ENCODE measurements at regions of chr3 and their contacts with region 1.

Region 1: GRCh38 chr3:129942296-129942695 is 32.2 kb upstream of the TRH start:
- DNase-seq: peak; percentile 75 to 91
- H3K4me3 ChIP-seq: no peak overlapping the region
- H3K27ac ChIP-seq: no peak overlapping the region
- H3K4me1 ChIP-seq: no peaks in the 10 kb centered on the region; a peak in 1 of 7 replicates
- H3K27me3 ChIP-seq: peaks cover 0 to 5% (median 0%) of the 10 kb centered on the region in 4 experiments; a peak in 1 of 7 replicates
- CTCF ChIP-seq: peak; percentile 87 to 94 (median 90)
- EP300 ChIP-seq: no peak
- POLR2A ChIP-seq: no peak
- RAD21 ChIP-seq: peak; percentile 97

Region 2: DNA sequence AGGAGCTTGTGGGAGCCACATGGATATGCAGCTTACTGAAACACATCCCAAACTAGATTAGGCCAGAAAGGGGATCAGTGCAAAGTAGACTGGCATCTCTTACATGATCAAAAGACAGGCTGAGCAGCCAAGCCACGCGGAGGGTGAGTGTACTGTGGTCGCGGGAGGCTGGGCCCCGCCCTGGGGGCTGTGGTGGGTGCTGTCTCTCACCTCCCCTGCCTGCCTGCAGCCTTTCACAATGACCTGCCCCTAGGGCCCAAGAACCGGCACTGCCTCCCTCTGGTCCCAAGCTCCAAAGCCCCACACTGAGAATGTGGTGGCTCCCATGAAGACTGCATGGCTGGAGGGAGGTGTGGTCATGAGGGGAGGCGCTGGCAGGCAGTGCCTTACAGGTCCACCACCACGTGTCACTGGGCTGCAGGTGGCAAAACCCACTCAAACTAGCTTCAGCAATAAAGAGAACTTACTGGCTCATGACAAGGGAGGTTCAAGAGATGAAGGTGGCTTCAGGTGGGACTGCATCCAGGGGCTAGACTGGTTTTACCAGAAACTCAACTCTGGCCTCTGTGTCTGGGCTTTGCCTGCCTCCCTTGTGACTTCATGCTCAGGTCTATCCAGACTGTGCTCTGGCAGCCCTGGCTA is 308.4 kb before region 1 on chr3:
- CTCF ChIA-PET with region 1: interaction called, 11 read pairs
- POLR2A ChIA-PET with region 1: no interaction called
- DNase-seq: no peak
- H3K4me3 ChIP-seq: no peak overlapping the region
- H3K27ac ChIP-seq: no peak overlapping the region
- H3K4me1 ChIP-seq: no peaks in the 10 kb centered on the region
- H3K27me3 ChIP-seq: no peaks in the 10 kb centered on the region
- CTCF ChIP-seq: no peak
- EP300 ChIP-seq: no peak
- POLR2A ChIP-seq: no peak
- RAD21 ChIP-seq: no peak

Region 3: DNA sequence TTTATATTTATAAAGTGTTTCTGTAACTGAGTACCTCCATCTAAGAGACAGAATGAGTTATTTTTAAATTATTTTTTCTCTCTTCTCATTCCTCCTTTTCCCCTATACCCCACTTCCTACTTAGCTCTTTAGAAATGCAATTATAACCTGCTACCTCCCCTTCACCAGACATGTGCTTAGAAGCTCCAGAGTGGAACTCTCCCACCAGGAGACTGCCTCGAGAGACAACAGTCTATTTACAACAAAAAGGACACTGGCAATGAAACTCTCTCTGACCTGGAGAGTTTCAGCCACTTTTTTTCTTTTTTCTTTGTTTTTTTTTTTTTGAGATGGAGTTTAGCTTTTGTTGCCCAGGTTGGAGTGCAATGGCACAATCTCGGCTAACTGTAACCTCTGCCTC is 226.4 kb before region 1 on chr3:
- CTCF ChIA-PET with region 1: no interaction called
- POLR2A ChIA-PET with region 1: no interaction called
- DNase-seq: no peak
- H3K4me3 ChIP-seq: no peak overlapping the region
- H3K27ac ChIP-seq: no peak overlapping the region
- H3K4me1 ChIP-seq: peaks cover 1 to 18% (median 14%) of the 10 kb centered on the region in 4 experiments; a peak in 6 of 7 replicates
- H3K27me3 ChIP-seq: no peaks in the 10 kb centered on the region
- CTCF ChIP-seq: no peak
- EP300 ChIP-seq: no peak
- POLR2A ChIP-seq: no peak
- RAD21 ChIP-seq: no peak

Region 4: DNA sequence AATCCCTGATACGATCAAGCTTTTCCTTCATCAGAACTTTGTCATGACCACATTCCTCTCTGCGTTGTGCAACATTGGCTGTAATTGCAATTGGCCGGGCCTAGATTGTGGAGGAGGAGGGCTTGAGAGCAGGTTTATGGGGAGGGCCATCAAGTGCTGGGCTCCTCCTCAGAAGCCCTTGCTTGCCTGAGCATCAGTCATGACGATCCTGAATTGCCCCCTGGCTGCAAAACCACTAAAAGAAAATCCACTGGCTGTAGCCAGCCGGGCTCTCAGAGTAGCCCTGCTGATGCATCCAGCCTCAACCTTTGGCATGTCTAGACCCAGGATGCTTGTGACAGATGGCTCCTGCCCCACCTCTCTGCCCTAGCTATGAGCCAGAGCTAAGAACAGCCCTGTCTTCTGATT is 18.8 kb after region 1 on chr3:
- CTCF ChIA-PET with region 1: interaction called, 45 read pairs
- POLR2A ChIA-PET with region 1: no interaction called
- DNase-seq: no peak
- H3K4me3 ChIP-seq: no peak overlapping the region
- H3K27ac ChIP-seq: no peak overlapping the region
- H3K4me1 ChIP-seq: no peaks in the 10 kb centered on the region
- H3K27me3 ChIP-seq: peaks cover 0 to 5% (median under 1%) of the 10 kb centered on the region in 4 experiments; a peak in 5 of 7 replicates
- CTCF ChIP-seq: no peak
- EP300 ChIP-seq: no peak
- POLR2A ChIP-seq: no peak
- RAD21 ChIP-seq: no peak

Region 5: DNA sequence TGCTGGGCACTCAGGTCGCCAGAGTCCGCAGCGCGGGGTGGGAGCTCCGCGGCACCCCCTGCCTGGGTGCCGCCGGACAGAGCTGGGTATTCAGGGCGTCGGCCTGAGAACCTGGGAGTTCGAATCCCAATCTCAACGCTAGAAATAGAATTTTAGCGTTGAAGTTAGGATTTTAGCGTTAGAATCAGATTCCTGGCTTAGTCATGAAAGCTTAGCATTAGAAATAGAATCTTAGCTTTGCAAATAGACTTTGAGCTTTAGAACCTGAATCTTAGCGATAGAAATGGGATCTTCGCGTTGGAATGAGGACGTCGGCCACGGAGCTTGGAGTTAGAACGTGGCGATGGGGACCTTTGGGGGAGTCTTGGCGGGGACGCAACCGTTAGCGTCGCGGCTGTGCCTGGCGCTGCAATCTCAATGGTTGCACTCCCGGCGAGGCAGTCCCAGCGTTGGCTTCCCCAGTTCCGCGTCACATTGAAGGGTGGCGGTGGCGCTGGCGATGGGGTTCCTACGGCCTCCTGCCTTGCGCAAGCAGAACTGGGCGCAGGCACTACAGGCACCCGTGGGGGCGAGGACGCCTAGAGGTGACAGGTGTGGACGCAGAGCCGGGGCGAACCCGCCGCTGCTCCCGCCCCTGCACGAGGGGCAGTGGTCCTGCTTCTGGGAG is 32.9 kb after region 1 on chr3:
- CTCF ChIA-PET with region 1: interaction called, 53 read pairs
- POLR2A ChIA-PET with region 1: interaction called, 3 read pairs
- DNase-seq: peak in 1 of 2 experiments; percentile 66
- H3K4me3 ChIP-seq: peak overlapping the region; percentile 3 to 55 (median 17); a peak in 3 of 8 replicates
- H3K27ac ChIP-seq: no peak overlapping the region
- H3K4me1 ChIP-seq: peaks cover 0 to 20% (median 11%) of the 10 kb centered on the region in 4 experiments; a peak in 5 of 7 replicates
- H3K27me3 ChIP-seq: peaks cover 63 to 96% (median 93%) of the 10 kb centered on the region in 4 experiments
- CTCF ChIP-seq: no peak
- EP300 ChIP-seq: no peak
- POLR2A ChIP-seq: no peak
- RAD21 ChIP-seq: no peak

Region 6: GRCh38 chr3:129992781-129993180 is 50.5 kb after region 1 on chr3:
- CTCF ChIA-PET with region 1: interaction called, 99 read pairs
- POLR2A ChIA-PET with region 1: no interaction called
- DNase-seq: peak in 1 of 2 experiments; percentile 52
- H3K4me3 ChIP-seq: no peak overlapping the region
- H3K27ac ChIP-seq: no peak overlapping the region
- H3K4me1 ChIP-seq: no peaks in the 10 kb centered on the region
- H3K27me3 ChIP-seq: peaks cover 0 to 3% (median 1%) of the 10 kb centered on the region in 4 experiments; a peak in 5 of 7 replicates
- CTCF ChIP-seq: peak; percentile 36 to 67 (median 50)
- EP300 ChIP-seq: no peak
- POLR2A ChIP-seq: no peak
- RAD21 ChIP-seq: peak; percentile 20 to 26; a peak in 2 of 4 replicates

Region 7: DNA sequence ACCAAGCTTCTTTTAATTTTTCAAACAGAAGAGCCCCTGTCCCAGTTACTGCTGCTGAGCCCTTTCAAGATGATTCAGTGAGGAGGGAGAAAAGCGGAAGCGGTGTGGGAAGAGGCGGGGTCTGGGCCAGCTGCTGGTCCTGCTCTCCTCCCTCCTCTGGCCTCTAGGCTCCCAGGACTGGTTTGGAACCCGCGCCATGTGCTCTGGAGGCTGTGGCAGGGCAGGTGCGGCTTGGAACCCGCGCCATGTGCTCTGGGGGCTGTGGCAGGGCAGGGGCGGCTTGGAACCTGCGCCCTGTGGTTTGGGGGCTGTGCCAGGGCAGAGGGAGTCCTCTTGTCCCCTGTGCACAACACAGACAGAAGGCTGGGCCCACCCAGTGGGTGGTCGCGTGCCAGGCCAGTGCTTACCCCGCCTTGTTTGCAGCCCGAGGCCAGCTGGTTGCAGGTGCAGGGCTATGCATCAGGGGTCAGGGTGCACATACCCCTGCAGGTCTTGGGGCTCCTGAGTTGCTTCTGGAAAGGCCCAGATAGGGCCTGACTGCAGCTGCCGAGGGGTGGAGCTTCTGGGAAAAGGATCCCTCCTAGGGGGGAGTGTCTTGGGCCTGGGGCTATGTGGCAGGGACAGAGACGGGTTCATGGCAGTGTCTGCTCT is 151.6 kb after region 1 on chr3:
- CTCF ChIA-PET with region 1: interaction called, 165 read pairs
- POLR2A ChIA-PET with region 1: interaction called, 4 read pairs
- DNase-seq: peak in 1 of 2 experiments; percentile 61
- H3K4me3 ChIP-seq: no peak overlapping the region
- H3K27ac ChIP-seq: no peak overlapping the region
- H3K4me1 ChIP-seq: peaks cover 0 to 13% (median 4%) of the 10 kb centered on the region in 4 experiments; a peak in 3 of 7 replicates
- H3K27me3 ChIP-seq: no peaks in the 10 kb centered on the region
- CTCF ChIP-seq: no peak
- EP300 ChIP-seq: no peak
- POLR2A ChIP-seq: no peak
- RAD21 ChIP-seq: no peak